Activated CD4-positive, alpha-beta memory T cell treated with anti-CD3 and anti-CD28 coated beads for 36 hours (primary cell): ENCODE measurements at regions of chr17 and their contacts with region 1.

Region 1: DNA sequence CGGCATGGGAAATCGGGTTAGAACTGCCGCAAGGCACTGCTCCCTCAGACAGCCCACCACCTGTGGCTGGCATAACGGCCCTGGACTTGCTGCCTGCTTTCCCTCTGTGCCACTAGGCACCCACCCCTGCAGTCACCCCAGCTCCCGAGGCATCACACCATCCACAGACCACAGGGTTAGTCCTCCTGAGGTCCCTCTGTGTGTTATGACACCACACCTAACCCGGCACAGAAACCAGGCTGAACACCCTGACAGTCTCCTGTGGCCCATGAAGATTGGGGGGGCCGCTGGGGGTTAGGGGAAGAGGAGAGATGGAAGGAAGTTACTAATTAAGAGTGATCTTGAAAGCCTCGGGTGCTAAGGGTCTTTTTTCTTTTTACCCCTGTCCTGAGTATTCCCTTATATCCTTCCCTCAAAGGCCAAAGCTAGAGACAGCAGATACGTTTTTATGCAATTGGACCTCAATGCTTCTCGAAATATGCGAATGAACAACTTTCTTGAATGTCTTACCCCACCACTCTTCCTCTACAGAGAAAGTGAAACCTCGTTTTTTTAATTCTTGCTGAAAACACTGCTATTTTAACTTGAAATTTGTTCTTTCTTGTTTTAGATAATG is 7.0 kb downstream of the CYTH1 start:
- DNase-seq: peak; percentile 89
- H3K4me3 Mint-ChIP-seq: peak overlapping the region; percentile 82
- H3K27ac Mint-ChIP-seq: peak overlapping the region; percentile 99
- H3K4me1 Mint-ChIP-seq: peaks cover 59% of the 10 kb centered on the region
- H3K27me3 Mint-ChIP-seq: no peaks in the 10 kb centered on the region

Region 2: DNA sequence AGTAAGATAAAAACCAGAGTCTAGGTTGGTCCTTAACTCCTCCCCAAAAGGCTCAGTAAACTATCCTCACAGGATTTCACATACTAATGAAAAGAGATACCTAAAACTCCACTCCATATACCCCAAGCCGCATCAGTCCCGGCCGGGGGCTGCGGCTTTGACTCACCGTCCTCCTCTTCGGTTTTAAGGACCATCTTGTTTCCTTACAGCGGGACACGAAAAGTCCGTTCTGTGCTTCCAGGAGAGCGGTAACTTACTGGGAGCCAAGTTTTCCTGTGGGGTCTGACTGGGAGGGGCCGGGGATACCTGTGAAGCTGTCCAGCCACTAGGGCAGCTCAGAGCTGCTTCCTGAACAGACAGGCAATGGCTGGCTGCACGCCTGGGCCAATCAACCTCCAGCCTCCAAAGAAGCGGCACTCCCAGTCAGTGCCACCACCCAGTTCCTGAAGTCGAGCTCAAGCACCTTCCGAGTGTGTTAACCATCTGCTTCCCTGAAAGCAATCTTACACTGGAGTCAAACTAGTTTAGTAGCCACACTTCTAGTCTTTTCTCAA is 38.5 kb before region 1 on chr17:
- CTCF ChIA-PET with region 1: interaction called, 3 read pairs
- POLR2A ChIA-PET with region 1: interaction called, 5 read pairs
- intact Hi-C with region 1: loop called (anchors 5 kb)
- DNase-seq: peak; percentile 80
- H3K4me3 Mint-ChIP-seq: peak overlapping the region; percentile 82
- H3K27ac Mint-ChIP-seq: peak overlapping the region; percentile 94
- H3K4me1 Mint-ChIP-seq: peaks cover 90% of the 10 kb centered on the region
- H3K27me3 Mint-ChIP-seq: no peaks in the 10 kb centered on the region

Region 3: GRCh38 chr17:78759203-78759968 is 15.7 kb before region 1 on chr17:
- CTCF ChIA-PET with region 1: interaction called, 8 read pairs
- POLR2A ChIA-PET with region 1: interaction called, 481 read pairs
- intact Hi-C with region 1: loop called (anchors 1 kb)
- DNase-seq: peak; percentile 85
- H3K4me3 Mint-ChIP-seq: peak overlapping the region; percentile 68
- H3K27ac Mint-ChIP-seq: peak overlapping the region; percentile 98
- H3K4me1 Mint-ChIP-seq: peaks cover 82% of the 10 kb centered on the region
- H3K27me3 Mint-ChIP-seq: no peaks in the 10 kb centered on the region

Region 4: GRCh38 chr17:78791840-78792694 is 17.0 kb after region 1 on chr17:
- CTCF ChIA-PET with region 1: no interaction called
- POLR2A ChIA-PET with region 1: no interaction called
- intact Hi-C with region 1: no loop called
- DNase-seq: no peak
- H3K4me3 Mint-ChIP-seq: no peak overlapping the region
- H3K27ac Mint-ChIP-seq: peak overlapping the region; percentile 61
- H3K4me1 Mint-ChIP-seq: peaks cover 51% of the 10 kb centered on the region
- H3K27me3 Mint-ChIP-seq: no peaks in the 10 kb centered on the region

Region 5: GRCh38 chr17:78817123-78817522 is 42.1 kb after region 1 on chr17:
- CTCF ChIA-PET with region 1: no interaction called
- POLR2A ChIA-PET with region 1: interaction called, 4 read pairs
- intact Hi-C with region 1: loop called (anchors 1 kb)
- DNase-seq: peak; percentile 89
- H3K4me3 Mint-ChIP-seq: peak overlapping the region; percentile 2
- H3K27ac Mint-ChIP-seq: peak overlapping the region; percentile 92
- H3K4me1 Mint-ChIP-seq: peaks cover 61% of the 10 kb centered on the region
- H3K27me3 Mint-ChIP-seq: no peaks in the 10 kb centered on the region